MCF 10A (cell line): ENCODE measurements at regions of chr9 and their contacts with region 1.

Region 1: GRCh38 chr9:130042833-130043653 is at the start of gene FNBP1:
- DNase-seq: peak; percentile 63
- H3K4me3 Mint-ChIP-seq: peak within 1 kb of the TSS; percentile 99
- H3K27ac Mint-ChIP-seq: peak within 1 kb of the TSS; percentile 93
- H3K4me1 Mint-ChIP-seq: peaks cover 8% of the 10 kb centered on the region
- H3K27me3 Mint-ChIP-seq: no peaks in the 10 kb centered on the region
- CTCF ChIP-seq: no peak
- total RNA-seq, gene FNBP1: 24.4 and 26.6 TPM in 2 replicates

Region 2: DNA sequence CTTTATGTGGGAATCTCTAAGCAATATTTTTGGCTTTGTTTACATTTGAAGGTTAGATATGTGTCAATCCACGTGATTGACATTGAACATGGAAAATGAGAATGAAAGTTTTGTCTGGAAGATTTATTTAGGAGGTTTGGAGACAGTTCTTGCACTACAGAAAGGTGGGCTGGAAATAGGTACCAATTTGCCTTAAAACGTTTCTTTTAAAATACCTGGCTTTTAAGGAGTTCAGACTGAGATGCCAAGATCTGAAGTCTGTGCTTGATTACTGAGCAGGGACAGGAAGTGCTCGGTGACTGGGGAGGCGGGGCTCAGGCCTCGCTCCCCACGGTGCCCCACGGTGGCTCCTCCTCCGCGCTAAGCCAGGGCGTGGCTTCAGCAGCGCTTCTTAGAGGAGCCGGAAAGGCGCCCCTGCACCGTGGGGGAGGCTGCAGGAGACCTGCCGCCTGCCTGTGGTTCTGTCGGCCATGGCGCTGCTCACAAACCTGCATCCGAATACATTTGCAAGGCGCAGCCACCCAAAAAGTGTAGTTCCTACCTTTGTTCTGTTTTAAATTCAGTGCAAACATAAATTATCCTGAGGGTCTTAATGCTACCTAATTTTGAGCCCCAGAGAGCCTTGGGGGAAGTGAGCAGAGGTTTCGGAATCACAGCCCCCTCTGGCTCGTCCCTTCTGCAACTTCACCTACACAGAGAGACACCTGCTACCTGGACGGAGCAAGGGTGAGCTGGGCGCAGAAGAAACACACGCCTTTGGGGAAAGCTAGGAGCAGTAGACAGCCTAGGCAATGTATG is 158.6 kb before region 1 on chr9:
- CTCF ChIA-PET with region 1: interaction called, 4 read pairs
- POLR2A ChIA-PET with region 1: interaction called, 9 read pairs
- intact Hi-C with region 1: loop called (anchors 1 kb)
- DNase-seq: peak; percentile 83
- H3K4me3 Mint-ChIP-seq: peak overlapping the region; percentile 56
- H3K27ac Mint-ChIP-seq: peak overlapping the region; percentile 10
- H3K4me1 Mint-ChIP-seq: peaks cover 5% of the 10 kb centered on the region
- H3K27me3 Mint-ChIP-seq: no peaks in the 10 kb centered on the region
- CTCF ChIP-seq: no peak

Region 3: GRCh38 chr9:129929467-129930125 is 113.4 kb before region 1 on chr9:
- CTCF ChIA-PET with region 1: no interaction called
- POLR2A ChIA-PET with region 1: interaction called, 3 read pairs
- intact Hi-C with region 1: loop called (anchors 2 kb)
- DNase-seq: peak; percentile 62
- H3K4me3 Mint-ChIP-seq: no peak overlapping the region
- H3K27ac Mint-ChIP-seq: no peak overlapping the region
- H3K4me1 Mint-ChIP-seq: no peaks in the 10 kb centered on the region
- H3K27me3 Mint-ChIP-seq: no peaks in the 10 kb centered on the region
- CTCF ChIP-seq: no peak

Region 4: GRCh38 chr9:129962889-129963703 is 79.9 kb before region 1 on chr9:
- CTCF ChIA-PET with region 1: no interaction called
- POLR2A ChIA-PET with region 1: interaction called, 10 read pairs
- intact Hi-C with region 1: loop called (anchors 5 kb)
- DNase-seq: peak; percentile 58
- H3K4me3 Mint-ChIP-seq: peak overlapping the region; percentile 83
- H3K27ac Mint-ChIP-seq: peak overlapping the region; percentile 86
- H3K4me1 Mint-ChIP-seq: peaks cover 6% of the 10 kb centered on the region
- H3K27me3 Mint-ChIP-seq: no peaks in the 10 kb centered on the region
- CTCF ChIP-seq: no peak

Region 5: DNA sequence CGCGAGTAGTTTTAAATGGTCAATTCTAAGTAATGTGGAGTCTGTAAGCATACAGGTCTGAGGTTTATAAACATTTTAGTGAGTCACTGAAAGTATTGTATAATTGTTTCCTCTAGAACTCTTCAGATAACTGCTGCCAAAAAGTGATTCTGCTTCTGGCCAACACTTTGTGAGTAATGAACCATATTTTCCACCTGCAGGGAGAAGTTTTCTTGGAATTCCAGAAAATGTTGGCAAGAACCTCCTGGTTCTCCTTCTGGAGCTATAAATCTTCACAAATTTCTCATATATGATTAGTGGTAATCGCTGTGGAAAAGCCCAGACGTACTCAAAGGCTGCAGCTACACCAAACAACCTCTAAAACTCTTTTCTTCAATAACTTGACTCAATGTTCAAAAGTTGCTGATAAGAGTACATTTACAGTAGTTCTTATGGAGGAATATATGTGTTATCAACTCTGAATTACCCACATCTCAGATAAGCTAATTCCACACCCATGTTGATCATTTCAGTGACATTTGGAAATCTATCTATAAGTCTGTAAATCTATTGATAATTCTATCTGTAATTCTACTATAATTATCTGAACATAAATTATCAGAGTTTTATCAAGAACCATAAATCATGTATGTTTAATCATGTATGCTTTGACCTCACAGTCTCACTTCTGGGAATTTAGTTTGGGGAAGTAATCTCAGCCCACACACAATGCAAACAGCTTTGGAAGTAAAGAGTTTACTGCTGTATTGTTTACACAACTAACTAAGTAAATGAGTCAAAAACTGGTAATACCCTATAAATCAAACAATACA is 74.1 kb before region 1 on chr9:
- CTCF ChIA-PET with region 1: no interaction called
- POLR2A ChIA-PET with region 1: interaction called, 4 read pairs
- intact Hi-C with region 1: loop called (anchors 5 kb)
- DNase-seq: peak; percentile 87
- H3K4me3 Mint-ChIP-seq: no peak overlapping the region
- H3K27ac Mint-ChIP-seq: peak overlapping the region; percentile 41
- H3K4me1 Mint-ChIP-seq: peaks cover 12% of the 10 kb centered on the region
- H3K27me3 Mint-ChIP-seq: no peaks in the 10 kb centered on the region
- CTCF ChIP-seq: no peak

Region 6: DNA sequence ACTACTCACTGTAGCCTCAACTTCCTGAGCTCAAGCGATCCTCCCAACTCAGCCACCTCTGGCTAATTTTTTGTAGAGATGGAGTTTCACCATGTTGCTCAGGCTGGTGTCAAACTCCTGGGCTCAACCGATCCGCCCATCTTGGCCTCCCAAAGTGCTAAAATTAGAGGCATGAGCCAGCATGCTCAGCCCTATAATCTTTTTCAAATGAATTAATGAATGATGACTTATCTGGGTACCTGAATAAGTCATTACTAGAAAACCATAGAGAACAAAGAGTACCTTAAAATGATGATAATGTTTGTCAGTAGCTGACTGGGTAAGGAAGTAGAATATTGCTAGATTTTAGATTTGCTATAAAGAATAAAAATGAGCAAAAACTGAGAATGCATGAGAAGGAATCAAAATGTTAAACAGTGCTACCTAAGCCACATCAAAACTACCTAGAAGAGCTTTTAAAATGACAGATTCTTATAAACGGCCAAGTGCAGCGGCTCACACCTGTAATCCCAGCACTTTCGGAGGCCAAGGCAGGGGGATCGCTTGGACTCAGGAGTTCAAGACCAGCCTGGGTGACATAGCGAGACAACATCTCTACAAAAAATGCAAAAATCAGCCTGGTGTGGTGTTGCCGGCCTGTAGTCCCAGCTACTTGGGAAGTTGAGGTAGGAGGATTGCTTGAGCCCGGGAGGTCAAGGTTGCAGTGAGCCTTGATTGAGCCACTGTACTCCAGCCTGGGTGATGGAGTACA is 13.6 kb before region 1 on chr9:
- CTCF ChIA-PET with region 1: interaction called, 3 read pairs
- POLR2A ChIA-PET with region 1: interaction called, 12 read pairs
- intact Hi-C with region 1: no loop called
- DNase-seq: no peak
- H3K4me3 Mint-ChIP-seq: no peak overlapping the region
- H3K27ac Mint-ChIP-seq: peak overlapping the region; percentile 46
- H3K4me1 Mint-ChIP-seq: peaks cover 21% of the 10 kb centered on the region
- H3K27me3 Mint-ChIP-seq: no peaks in the 10 kb centered on the region
- CTCF ChIP-seq: no peak

Region 7: GRCh38 chr9:130053504-130054324 is 10.7 kb after region 1 on chr9 and contains the start of gene GPR107:
- CTCF ChIA-PET with region 1: interaction called, 4 read pairs
- POLR2A ChIA-PET with region 1: interaction called, 53 read pairs
- intact Hi-C with region 1: no loop called
- DNase-seq: peak; percentile 69
- H3K4me3 Mint-ChIP-seq: peak within 1 kb of the TSS; percentile 90
- H3K27ac Mint-ChIP-seq: peak within 1 kb of the TSS; percentile 91
- H3K4me1 Mint-ChIP-seq: no peaks in the 10 kb centered on the region
- H3K27me3 Mint-ChIP-seq: no peaks in the 10 kb centered on the region
- CTCF ChIP-seq: no peak
- total RNA-seq, gene GPR107: 32.9 and 41.8 TPM in 2 replicates